Heart left ventricle (tissue), 16 donors: ENCODE measurements at regions of chr1 and their contacts with region 1.

Region 1: GRCh38 chr1:218459878-218460711 is 115.0 kb downstream of the TGFB2 start:
- DNase-seq: peak in 4 of 5 donors; percentile 16 to 57 (median 31)
- ATAC-seq: peak; percentile 84 to 90 (median 86)
- H3K4me3 ChIP-seq: peak overlapping the region in 4 of 12 donors; percentile 11 to 25 (median 14)
- H3K27ac ChIP-seq: peak overlapping the region; percentile 19 to 87 (median 77)
- H3K4me1 ChIP-seq: peaks cover 5 to 53% (median 39%) of the 10 kb centered on the region in 12 donors
- H3K27me3 ChIP-seq: no peaks in the 10 kb centered on the region
- CTCF ChIP-seq: no peak
- POLR2A ChIP-seq: no peak

Region 2: GRCh38 chr1:218351391-218352074 is 108.6 kb before region 1 on chr1:
- intact Hi-C with region 1: loop called in 5 of 10 experiments (anchors 5 to 10 kb)
- DNase-seq: peak in 2 of 5 donors; percentile 23 to 60
- ATAC-seq: peak in 3 of 4 donors; percentile 21 to 64 (median 59)
- H3K4me3 ChIP-seq: peak overlapping the region in 11 of 12 donors; percentile 3 to 87 (median 39)
- H3K27ac ChIP-seq: peak overlapping the region in 11 of 12 donors; percentile 24 to 91 (median 70)
- H3K4me1 ChIP-seq: peaks cover 0 to 42% (median 16%) of the 10 kb centered on the region in 12 donors
- H3K27me3 ChIP-seq: no peaks in the 10 kb centered on the region
- CTCF ChIP-seq: peak in 10 of 12 donors; percentile 8 to 61 (median 40)
- POLR2A ChIP-seq: no peak

Region 3: GRCh38 chr1:218361298-218362065 is 98.6 kb before region 1 on chr1:
- intact Hi-C with region 1: loop called in 1 of 10 experiments (anchors 10 kb)
- DNase-seq: peak in 1 of 5 donors; percentile 39
- ATAC-seq: peak in 2 of 4 donors; percentile 59 to 62
- H3K4me3 ChIP-seq: no peak overlapping the region
- H3K27ac ChIP-seq: peak overlapping the region in 4 of 12 donors; percentile 6 to 22 (median 8)
- H3K4me1 ChIP-seq: peaks cover 0 to 50% (median 15%) of the 10 kb centered on the region in 12 donors
- H3K27me3 ChIP-seq: no peaks in the 10 kb centered on the region
- CTCF ChIP-seq: peak; percentile 26 to 69 (median 54)
- POLR2A ChIP-seq: no peak

Region 4: GRCh38 chr1:218421531-218421930 is 38.6 kb before region 1 on chr1:
- intact Hi-C with region 1: no loop called
- DNase-seq: no peak
- ATAC-seq: peak in 3 of 4 donors; percentile 26 to 42 (median 32)
- H3K4me3 ChIP-seq: no peak overlapping the region
- H3K27ac ChIP-seq: no peak overlapping the region
- H3K4me1 ChIP-seq: peaks cover 0 to 17% (median 0%) of the 10 kb centered on the region in 12 donors
- H3K27me3 ChIP-seq: no peaks in the 10 kb centered on the region
- CTCF ChIP-seq: no peak
- POLR2A ChIP-seq: no peak

Region 5: GRCh38 chr1:218476380-218476779 is 16.3 kb after region 1 on chr1:
- intact Hi-C with region 1: loop called in 1 of 10 experiments (anchors 2 kb)
- DNase-seq: no peak
- ATAC-seq: no peak
- H3K4me3 ChIP-seq: no peak overlapping the region
- H3K27ac ChIP-seq: peak overlapping the region in 6 of 12 donors; percentile 9 to 66 (median 52)
- H3K4me1 ChIP-seq: peaks cover 0 to 64% (median 28%) of the 10 kb centered on the region in 12 donors
- H3K27me3 ChIP-seq: no peaks in the 10 kb centered on the region
- CTCF ChIP-seq: no peak
- POLR2A ChIP-seq: no peak

Region 6: GRCh38 chr1:218499011-218499691 is 39.1 kb after region 1 on chr1:
- intact Hi-C with region 1: no loop called
- DNase-seq: no peak
- ATAC-seq: peak; percentile 43 to 73 (median 63)
- H3K4me3 ChIP-seq: peak overlapping the region in 9 of 12 donors; percentile 10 to 51 (median 38)
- H3K27ac ChIP-seq: peak overlapping the region in 10 of 12 donors; percentile 23 to 79 (median 52)
- H3K4me1 ChIP-seq: peaks cover 0 to 23% (median 8%) of the 10 kb centered on the region in 12 donors
- H3K27me3 ChIP-seq: no peaks in the 10 kb centered on the region
- CTCF ChIP-seq: no peak
- POLR2A ChIP-seq: no peak